ENCODE measurements at regions of chr13 and their contacts with region 1.

Region 1: DNA sequence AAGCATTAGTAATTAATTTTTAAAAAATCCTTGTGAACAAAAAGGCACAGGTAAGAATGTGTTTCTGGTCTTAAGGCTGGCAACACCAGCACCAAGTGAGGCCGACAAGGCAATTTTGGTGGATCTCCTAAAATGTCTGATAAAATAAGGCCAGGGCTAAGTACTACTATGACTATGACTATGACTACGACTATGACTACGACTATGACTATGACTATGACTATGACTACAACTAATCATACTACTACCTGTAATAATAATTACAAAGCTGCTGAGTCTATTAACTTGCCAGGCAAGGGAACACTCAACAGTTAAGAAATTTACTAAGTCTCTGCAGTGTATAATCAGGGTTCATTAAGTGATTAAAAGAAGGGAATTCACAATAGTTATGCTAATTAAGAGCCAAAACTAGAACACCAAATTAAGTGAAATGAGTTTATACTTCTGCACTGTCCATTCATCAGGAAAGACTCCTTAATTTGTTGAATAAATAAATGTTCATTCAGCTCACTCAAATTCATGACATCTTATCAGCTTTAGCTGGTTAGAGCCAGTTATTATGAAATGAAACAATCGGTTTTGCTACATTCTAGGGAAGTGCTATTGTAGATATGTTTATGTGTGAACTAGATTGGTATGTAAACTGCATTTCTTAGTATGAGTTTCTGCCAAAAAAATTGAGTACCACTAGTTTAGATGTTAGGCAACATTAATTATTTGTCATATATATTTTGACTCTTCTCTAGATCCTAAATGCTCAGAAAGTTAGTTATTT is 1626.2 kb upstream of the PCDH20 start:
- DNase-seq: no peak
- ATAC-seq: no peak
- H3K4me3 ChIP-seq: no peak overlapping the region
- H3K4me3 Mint-ChIP-seq: no peak overlapping the region
- H3K27ac ChIP-seq: no peak overlapping the region
- H3K27ac Mint-ChIP-seq: no peak overlapping the region
- H3K4me1 ChIP-seq: no peaks in the 10 kb centered on the region
- H3K4me1 Mint-ChIP-seq: no peaks in the 10 kb centered on the region
- H3K27me3 ChIP-seq: no peaks in the 10 kb centered on the region
- H3K27me3 Mint-ChIP-seq: no peaks in the 10 kb centered on the region

Region 2: GRCh38 chr13:63088226-63088625 is 46.4 kb after region 1 on chr13:
- CTCF ChIA-PET with region 1: no interaction called
- POLR2A ChIA-PET with region 1: no interaction called
- intact Hi-C with region 1: loop called in 1 of 2 experiments (anchors 2 kb)
- DNase-seq: no peak
- ATAC-seq: no peak
- H3K4me3 ChIP-seq: no peak overlapping the region
- H3K4me3 Mint-ChIP-seq: no peak overlapping the region
- H3K27ac ChIP-seq: no peak overlapping the region
- H3K27ac Mint-ChIP-seq: no peak overlapping the region
- H3K4me1 ChIP-seq: no peaks in the 10 kb centered on the region
- H3K4me1 Mint-ChIP-seq: no peaks in the 10 kb centered on the region
- H3K27me3 ChIP-seq: no peaks in the 10 kb centered on the region
- H3K27me3 Mint-ChIP-seq: no peaks in the 10 kb centered on the region